Activated CD8-positive, alpha-beta T cell treated with anti-CD3 and anti-CD28 coated beads, Interleukin-2, amount 10 ng/mL, durations not matched to agents 7 days and 5 days (primary cell): ENCODE measurements at regions of chr22 and their contacts with region 1.

Region 1: DNA sequence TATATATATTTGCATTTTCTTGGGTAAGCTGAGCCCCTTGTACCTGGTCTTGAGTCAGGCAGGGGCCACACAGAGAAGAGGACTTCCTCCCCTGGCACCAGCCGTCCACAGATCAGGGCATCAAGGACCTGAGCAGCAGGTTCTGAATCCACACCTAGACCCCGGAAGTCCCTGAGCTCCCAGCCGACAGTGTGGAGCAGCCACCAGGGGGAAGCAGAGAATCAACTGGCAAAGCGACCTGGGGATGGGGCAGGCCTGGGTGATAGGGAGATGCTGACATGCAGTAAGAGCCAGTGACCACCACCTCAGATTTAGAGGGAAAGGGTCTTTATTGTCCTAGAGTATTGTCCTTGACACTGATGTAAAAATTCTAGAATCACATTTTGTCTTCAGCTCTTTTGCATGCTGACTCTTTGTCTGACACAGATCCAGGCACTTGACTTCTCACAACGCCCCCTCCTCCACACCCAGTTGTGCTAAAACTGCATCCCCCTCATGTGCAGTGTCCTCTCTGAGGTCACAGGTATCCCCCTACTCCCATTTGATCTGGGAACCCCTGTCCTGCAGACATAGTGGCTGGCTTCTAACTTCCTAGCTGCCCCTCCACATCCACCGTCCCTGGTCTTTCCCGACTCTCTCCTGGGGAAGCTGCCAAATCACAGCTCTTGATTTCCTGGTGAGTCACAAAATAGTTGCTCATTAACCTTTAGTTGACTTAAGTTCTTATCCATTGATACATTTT is 109.3 kb downstream of the GGTLC2 start:
- DNase-seq: peak; percentile 86
- ATAC-seq: peak; percentile 97
- H3K4me3 Mint-ChIP-seq: no peak overlapping the region
- H3K27ac Mint-ChIP-seq: no peak overlapping the region
- H3K4me1 Mint-ChIP-seq: peaks cover 34% of the 10 kb centered on the region
- H3K27me3 Mint-ChIP-seq: peaks cover 6% of the 10 kb centered on the region

Region 2: DNA sequence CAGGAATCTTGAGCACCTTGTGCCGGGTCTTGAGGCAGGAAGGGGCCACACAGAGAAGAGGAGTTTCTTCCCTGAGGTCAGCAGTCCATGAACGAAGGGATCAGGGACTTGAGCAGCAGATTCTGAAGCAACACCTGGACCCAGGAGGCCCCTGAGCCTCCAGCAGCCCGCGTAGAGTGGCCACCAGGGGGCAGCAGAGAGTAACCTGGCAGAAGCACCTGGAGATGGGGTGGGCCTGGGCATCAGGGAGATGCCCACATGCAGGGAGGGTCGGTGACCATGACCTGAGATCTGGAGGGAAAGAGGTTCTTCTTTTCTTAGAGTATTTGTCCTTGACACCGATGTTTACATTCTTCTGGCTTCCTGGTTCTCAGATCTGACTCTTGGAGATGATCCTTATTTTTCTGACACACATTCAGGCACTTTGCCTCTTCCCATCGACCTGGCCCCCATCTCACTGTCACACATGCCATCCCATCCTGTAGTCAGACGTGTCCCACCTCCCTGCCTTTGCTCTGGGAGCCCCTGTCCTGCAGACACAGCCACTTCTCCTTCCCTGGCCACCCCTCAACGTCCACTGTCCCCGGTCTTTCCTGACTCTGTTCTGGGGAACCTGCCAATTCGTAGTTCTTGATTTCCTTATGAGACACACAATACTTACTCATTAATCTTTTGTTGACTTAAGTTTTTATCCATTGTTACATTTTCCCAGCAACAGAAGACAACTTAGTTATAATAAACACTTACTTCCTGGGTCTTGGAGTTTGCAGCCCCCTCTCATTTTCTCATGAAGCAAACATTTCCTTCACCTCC is 42.8 kb before region 1 on chr22:
- CTCF ChIA-PET with region 1: interaction called, 12 read pairs
- POLR2A ChIA-PET with region 1: no interaction called
- DNase-seq: peak; percentile 81
- ATAC-seq: peak; percentile 86
- H3K4me3 Mint-ChIP-seq: no peak overlapping the region
- H3K27ac Mint-ChIP-seq: no peak overlapping the region
- H3K4me1 Mint-ChIP-seq: peaks cover 4% of the 10 kb centered on the region
- H3K27me3 Mint-ChIP-seq: no peaks in the 10 kb centered on the region

Region 3: DNA sequence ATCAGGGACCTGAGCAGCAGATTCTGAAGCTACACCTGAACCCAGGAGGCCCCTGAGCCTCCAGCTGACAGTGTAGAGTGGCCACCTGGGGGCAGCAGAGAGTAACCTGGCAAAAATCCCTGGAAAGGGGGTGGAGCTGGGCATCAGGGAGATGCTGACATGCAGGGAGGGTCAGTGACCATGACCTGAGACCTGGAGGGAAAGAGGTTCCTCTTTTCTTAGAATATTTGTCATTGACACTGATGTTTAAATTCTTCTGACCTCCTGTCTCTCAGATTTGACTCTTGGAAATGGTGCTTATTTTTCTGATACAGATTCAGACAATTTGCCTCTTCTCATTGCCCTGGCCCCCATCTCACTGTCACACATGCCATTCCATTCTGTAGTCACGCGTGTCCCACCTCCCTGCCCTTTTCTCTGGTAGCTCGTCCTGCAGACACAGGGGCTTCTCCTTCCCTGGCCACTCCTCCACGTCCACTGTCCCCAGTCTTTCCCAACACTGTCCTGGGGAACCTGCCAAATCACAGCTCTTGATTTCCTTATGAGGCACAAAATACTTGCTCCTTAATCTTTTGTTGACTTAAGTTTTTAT is 16.7 kb after region 1 on chr22:
- CTCF ChIA-PET with region 1: interaction called, 134 read pairs
- POLR2A ChIA-PET with region 1: no interaction called
- DNase-seq: peak; percentile 59
- ATAC-seq: peak; percentile 69
- H3K4me3 Mint-ChIP-seq: no peak overlapping the region
- H3K27ac Mint-ChIP-seq: no peak overlapping the region
- H3K4me1 Mint-ChIP-seq: no peaks in the 10 kb centered on the region
- H3K27me3 Mint-ChIP-seq: peaks cover 18% of the 10 kb centered on the region

Region 4: GRCh38 chr22:22787786-22788459 is 34.2 kb after region 1 on chr22:
- CTCF ChIA-PET with region 1: interaction called, 27 read pairs
- POLR2A ChIA-PET with region 1: interaction called, 5 read pairs
- DNase-seq: peak; percentile 81
- ATAC-seq: peak; percentile 90
- H3K4me3 Mint-ChIP-seq: no peak overlapping the region
- H3K27ac Mint-ChIP-seq: peak overlapping the region; percentile 30
- H3K4me1 Mint-ChIP-seq: peaks cover 25% of the 10 kb centered on the region
- H3K27me3 Mint-ChIP-seq: peaks cover 13% of the 10 kb centered on the region

Region 5: DNA sequence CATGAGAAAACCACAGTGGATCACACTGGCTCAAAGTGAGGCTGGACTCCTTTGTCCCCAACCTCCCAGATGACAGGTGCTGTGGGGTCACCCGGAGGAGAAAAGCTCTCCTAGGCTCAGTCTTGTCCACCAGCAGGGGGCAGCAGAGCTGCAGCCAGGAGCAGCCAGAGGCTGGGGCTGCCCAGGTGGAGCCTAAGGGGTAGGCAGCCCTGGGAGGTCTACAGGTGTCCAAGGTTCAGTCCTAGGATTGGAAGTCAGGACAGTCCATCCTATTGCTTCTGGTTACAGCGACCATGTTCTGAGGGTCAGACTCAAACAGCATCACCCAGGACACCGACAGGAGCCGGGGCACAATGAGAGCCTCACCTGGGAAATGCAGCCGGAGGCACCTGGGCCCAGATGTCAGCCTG is 56.3 kb after region 1 on chr22:
- CTCF ChIA-PET with region 1: interaction called, 10 read pairs
- POLR2A ChIA-PET with region 1: no interaction called
- DNase-seq: peak; percentile 75
- ATAC-seq: peak; percentile 88
- H3K4me3 Mint-ChIP-seq: no peak overlapping the region
- H3K27ac Mint-ChIP-seq: no peak overlapping the region
- H3K4me1 Mint-ChIP-seq: peaks cover 5% of the 10 kb centered on the region
- H3K27me3 Mint-ChIP-seq: peaks cover 24% of the 10 kb centered on the region